ENCODE measurements at regions of chr14 and their contacts with region 1.

Region 1: DNA sequence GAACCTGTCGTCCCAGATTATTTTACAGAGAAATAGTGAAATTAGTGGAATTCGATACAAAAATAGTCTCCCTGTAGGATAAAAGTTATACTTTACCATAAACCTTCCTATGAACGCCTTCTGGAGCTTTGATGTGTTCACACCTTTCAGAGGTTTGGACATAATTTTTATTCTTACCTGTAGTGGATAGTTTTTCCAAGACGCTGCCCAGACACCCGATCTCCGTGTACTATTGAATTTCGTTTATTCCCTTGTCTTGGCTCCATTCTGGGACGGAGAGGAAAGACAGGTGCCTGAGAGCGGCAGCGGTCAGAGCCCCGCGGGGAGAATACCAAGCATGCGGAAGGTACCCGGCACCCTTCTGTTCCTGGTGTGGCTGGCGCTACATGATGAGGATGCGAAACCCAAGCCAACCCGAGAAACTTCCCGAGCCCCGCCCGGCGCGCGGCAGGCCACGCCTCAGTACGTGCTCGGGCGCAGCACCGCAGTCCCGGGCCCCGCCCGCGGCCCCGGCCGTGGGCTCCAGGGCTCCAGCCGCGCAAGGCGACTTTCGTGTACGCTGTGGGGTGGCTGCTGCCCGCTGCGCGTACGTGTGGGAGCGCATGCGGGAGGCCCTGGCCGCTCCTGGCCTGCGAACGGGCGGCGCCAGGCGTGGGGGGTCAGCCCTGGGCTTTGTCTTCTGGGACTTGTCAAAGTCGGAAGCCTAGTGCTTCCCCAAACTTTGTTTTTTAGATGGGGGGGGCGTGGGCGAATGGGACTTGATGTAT is 11.3 kb upstream of the SNAPC1 start:
- DNase-seq: peak; percentile 97

Region 2: DNA sequence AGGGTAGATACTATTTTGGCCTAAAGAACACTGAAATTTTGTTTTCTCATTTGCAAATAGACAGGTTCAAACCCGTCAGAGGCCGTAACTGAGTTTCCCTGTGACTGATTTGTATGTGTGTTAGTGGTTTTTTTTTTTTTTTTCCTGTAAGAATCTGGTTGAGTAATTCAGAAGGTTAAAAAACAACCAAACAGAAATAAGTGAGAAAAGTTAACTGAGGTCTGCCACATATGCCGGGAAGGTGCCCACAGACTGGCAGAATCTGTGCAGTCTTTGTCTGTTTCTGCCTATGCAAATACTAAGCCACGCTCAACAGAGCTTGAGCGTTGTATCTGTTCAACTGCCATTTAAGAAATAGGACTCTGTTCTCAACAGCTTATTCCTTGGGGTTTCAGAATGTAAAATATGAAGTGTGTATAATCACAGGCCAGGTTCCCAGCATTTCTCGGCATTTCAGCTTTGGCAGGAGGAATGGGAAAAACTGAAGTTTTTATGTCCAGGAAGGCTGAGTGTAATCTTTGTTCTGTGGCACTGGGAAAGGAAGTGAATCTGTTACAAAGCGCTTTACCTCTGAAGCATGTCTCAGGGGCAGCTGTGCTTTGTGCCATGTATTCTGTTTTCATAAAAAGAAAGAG is 247.6 kb before region 1 on chr14:
- intact Hi-C with region 1: no loop called
- DNase-seq: no peak

Region 3: DNA sequence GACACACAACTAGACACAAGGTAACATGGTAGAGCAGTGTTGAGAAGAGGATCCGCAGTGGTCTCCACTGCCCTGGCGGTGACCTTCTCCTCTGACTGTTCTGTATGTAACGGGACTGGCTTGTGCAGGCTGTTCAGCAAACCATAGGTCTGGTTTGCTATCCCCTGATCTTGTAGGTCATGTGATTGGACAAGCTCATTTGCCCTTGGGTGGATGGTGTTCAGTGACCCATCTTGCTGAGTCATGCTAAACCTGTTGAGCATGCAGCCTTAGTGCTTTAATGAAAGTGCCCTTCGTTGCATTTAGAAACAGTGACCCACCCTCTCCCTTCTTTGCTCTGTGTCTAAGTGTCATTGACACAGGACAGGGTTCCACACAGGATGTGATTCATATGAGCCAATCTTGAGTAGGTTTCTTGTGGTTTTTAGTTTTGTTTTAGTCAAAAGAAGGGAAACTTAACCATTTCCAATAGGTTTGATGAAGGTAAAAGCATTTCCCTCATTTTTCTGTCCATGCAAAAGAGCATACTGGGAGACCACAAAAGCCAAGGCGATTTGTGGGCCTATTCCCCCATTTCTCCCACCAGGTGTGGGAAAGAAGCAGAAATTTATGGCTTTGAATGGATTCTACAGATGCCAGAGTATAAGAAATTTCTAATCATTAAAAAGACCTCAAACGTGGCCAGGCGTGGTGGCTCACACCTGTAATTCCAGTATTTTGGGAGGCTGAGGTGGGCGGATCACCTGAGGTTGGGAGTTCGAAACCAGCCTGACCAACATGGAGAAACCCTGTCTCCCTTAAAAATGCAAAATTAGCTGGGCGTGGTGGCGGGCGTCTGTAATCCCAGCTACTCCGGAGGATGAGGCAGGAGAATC is 88.2 kb before region 1 on chr14:
- intact Hi-C with region 1: no loop called
- DNase-seq: no peak

Region 4: GRCh38 chr14:61694830-61695694 is 55.8 kb before region 1 on chr14 and contains the start of gene HIF1A:
- intact Hi-C with region 1: loop called (anchors 5 kb)
- DNase-seq: peak; percentile 98
- total RNA-seq, gene HIF1A: 73.2 TPM

Region 5: DNA sequence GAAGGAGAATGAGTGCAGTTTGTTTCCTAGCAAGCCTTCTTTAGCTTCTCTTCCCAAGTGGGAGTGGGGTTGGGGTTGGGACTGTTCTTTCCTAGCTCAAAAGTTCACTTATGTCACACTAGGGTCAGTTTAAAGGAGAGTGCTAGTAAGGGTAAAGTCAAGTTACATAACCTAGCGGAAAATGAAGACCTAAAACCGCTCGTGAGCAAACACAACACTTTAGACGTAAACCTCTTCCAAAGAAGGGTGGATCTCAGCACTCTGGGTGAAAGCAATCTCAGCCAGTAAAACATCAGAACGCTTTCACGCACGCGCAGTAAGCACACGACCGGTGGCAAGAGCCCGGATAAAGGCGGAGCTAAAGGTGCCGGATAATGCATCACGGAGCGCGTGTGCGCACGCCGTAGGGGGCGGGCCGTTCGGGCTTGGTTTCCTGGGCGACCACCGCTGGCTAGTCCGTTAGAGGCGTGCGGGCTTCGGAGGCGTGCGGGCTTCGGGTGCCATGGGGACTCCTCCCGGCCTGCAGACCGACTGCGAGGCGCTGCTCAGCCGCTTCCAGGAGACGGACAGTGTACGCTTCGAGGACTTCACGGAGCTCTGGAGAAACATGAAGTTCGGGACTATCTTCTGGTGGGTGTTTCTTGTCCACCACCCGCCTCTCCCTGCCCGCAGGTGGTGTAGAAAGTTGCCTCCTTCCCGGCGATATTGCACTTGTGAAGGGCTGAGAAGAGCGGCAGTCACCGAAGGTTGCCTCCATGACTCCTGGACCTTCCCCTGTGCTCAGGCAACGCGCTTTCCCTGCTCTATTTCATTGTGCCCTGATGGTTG is 11.3 kb after region 1 on chr14 and contains the start of gene SNAPC1:
- intact Hi-C with region 1: loop called (anchors 2 kb)
- DNase-seq: peak; percentile 97
- total RNA-seq, gene SNAPC1: 5.0 TPM

Measured in cardiac septum (tissue), 1 donor.